ENCODE measurements at regions of chr5 and their contacts with region 1.

Region 1: GRCh38 chr5:160399402-160400353 is at the start of gene FAM200C:
- DNase-seq: peak; percentile 79 to 84
- ATAC-seq: peak; percentile 99
- H3K4me3 ChIP-seq: peak within 1 kb of the TSS; percentile 63 to 89 (median 82)
- H3K27ac ChIP-seq: peak within 1 kb of the TSS; percentile 79 to 84 (median 82)
- H3K4me1 ChIP-seq: peaks cover 22 to 36% of the 10 kb centered on the region in 2 donors
- H3K27me3 ChIP-seq: no peaks in the 10 kb centered on the region
- CTCF ChIP-seq: no peak
- POLR2A ChIP-seq: peak; percentile 73 to 77
- total RNA-seq, gene FAM200C: 0.51 to 1.1 (median 0.86) TPM

Region 2: DNA sequence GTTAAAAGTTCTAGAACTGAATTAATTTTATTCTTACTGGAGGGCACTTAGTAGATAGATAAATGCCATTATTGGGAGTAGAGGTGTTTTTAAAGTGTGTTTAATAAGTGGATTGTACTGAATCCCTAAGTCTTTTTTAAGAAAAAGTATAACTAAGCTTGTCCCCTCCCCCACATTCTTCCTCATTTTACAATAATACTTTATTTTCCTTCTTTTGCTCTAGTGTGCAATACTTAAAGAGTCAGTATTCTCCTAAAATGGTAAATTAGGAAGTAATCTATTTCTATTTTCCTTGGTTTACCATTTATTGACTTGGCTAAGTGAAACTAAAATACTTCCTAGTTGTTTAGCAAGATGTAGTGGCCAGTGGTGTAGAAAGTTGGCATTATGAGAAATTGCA is 1125.0 kb before region 1 on chr5:
- in situ Hi-C with region 1: no loop called
- intact Hi-C with region 1: no loop called
- DNase-seq: no peak
- ATAC-seq: no peak
- H3K4me3 ChIP-seq: no peak overlapping the region
- H3K27ac ChIP-seq: no peak overlapping the region
- H3K4me1 ChIP-seq: no peaks in the 10 kb centered on the region
- H3K27me3 ChIP-seq: no peaks in the 10 kb centered on the region
- CTCF ChIP-seq: no peak
- POLR2A ChIP-seq: no peak

Region 3: GRCh38 chr5:160021831-160022446 is 377.7 kb before region 1 on chr5:
- in situ Hi-C with region 1: loop called in 1 of 4 experiments (anchors 10 kb)
- intact Hi-C with region 1: no loop called
- DNase-seq: no peak
- ATAC-seq: peak; percentile 89 to 91
- H3K4me3 ChIP-seq: no peak overlapping the region
- H3K27ac ChIP-seq: no peak overlapping the region
- H3K4me1 ChIP-seq: peaks cover 6 to 13% of the 10 kb centered on the region in 2 donors
- H3K27me3 ChIP-seq: no peaks in the 10 kb centered on the region
- CTCF ChIP-seq: peak; percentile 61 to 85 (median 77)
- POLR2A ChIP-seq: no peak

Region 4: DNA sequence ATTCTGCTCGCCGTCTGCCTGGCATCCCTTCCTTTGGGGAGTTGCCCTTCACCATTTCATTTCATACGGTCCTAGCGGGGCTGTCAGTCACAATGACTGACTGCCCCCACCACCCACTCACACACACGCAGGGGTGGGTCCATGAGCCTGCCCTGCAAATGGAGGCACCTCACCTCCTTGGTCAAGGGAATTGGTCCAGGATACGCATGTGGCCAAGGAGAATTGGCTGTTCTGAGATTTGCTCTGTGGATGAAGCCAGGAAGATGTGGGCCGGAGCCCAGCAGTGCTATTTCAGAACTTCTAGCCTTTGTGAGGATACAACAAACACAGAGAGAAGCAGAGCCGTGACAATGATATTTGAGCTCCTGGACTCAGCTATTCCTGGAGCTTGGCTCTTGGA is 46.3 kb before region 1 on chr5:
- in situ Hi-C with region 1: no loop called
- intact Hi-C with region 1: loop called (anchors 5 kb)
- DNase-seq: peak; percentile 69 to 90
- ATAC-seq: peak; percentile 96 to 97
- H3K4me3 ChIP-seq: peak overlapping the region in 3 of 4 donors; percentile 11 to 15 (median 11)
- H3K27ac ChIP-seq: peak overlapping the region; percentile 64 to 84 (median 72)
- H3K4me1 ChIP-seq: peaks cover 24 to 30% of the 10 kb centered on the region in 2 donors
- H3K27me3 ChIP-seq: no peaks in the 10 kb centered on the region
- CTCF ChIP-seq: no peak
- POLR2A ChIP-seq: no peak

Region 5: DNA sequence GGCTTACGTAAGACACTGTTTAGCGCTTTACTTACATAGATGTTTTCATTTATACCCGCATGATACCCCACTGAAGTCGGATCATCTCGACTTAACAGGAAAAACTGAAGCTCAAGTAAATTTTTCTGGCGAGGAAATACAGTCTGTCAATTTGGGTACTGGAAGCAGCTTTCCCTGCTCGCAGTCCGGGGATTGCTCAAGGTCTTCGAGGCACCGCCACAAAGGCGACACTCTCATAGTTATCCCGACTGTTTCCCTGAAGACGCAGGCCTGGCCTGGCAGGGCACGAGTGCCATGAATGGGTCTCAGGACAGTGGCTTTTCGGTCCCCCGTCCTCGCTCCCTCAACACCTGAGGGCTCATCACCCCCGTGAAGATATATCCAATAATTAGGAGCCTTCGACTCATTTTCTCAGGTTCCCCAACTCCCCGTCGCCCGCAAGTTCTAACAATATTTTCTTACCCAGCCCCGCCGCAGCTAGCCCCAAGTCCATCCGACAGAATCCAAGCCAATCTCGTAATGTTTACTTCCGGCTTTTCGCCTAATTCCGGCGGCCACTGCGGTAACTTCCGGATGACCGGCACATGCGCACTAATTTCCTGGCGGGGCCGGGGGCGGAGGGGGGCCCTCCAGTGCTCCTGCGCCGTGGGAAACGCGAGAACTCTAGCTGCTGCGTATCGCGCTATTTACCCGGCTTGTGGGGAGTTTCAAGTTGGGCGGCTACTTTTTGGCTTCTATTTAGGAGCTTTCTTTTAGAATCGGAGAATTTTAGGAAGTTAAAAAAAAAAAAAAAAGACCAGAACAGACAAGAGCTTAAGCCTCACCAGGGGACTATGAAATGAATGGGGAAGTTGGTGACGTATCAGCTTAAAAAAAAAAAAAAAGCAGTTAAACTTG is 19.1 kb after region 1 on chr5 and contains the start of gene SLU7:
- in situ Hi-C with region 1: no loop called
- intact Hi-C with region 1: loop called (anchors 1 kb)
- DNase-seq: peak; percentile 89 to 92
- ATAC-seq: peak; percentile 91 to 94
- H3K4me3 ChIP-seq: peak within 1 kb of the TSS; percentile 66 to 92 (median 84)
- H3K27ac ChIP-seq: peak within 1 kb of the TSS; percentile 87 to 91 (median 88)
- H3K4me1 ChIP-seq: peaks cover 27 to 28% of the 10 kb centered on the region in 2 donors
- H3K27me3 ChIP-seq: no peaks in the 10 kb centered on the region
- CTCF ChIP-seq: no peak
- POLR2A ChIP-seq: peak; percentile 63 to 67
- total RNA-seq, gene SLU7: 61.4 to 103 (median 87.2) TPM

Region 6: DNA sequence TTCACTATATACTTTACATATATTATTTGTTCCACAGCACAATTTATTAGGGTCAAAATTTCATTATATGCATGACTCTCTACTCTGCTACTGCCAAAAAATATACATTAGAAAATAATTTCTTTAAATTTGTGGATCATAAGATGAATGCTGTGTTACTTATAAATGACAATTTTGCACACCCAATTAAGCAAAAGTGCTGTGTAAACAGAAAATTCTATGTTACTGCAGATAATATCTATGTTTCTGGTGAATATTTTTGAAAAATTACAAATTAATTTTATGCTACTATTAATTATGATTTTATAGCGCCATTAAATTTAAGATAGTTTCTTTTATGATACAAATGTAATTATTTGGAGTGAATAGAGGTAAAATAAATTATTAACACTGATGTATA is 1226.0 kb after region 1 on chr5:
- in situ Hi-C with region 1: no loop called
- intact Hi-C with region 1: no loop called
- DNase-seq: no peak
- ATAC-seq: no peak
- H3K4me3 ChIP-seq: no peak overlapping the region
- H3K27ac ChIP-seq: no peak overlapping the region
- H3K4me1 ChIP-seq: no peaks in the 10 kb centered on the region
- H3K27me3 ChIP-seq: no peaks in the 10 kb centered on the region
- CTCF ChIP-seq: no peak
- POLR2A ChIP-seq: no peak

Measured in gastrocnemius medialis (tissue), 4 donors.